GM12878 (cell line): ENCODE measurements at regions of chr2 and their contacts with region 1.

Region 1: DNA sequence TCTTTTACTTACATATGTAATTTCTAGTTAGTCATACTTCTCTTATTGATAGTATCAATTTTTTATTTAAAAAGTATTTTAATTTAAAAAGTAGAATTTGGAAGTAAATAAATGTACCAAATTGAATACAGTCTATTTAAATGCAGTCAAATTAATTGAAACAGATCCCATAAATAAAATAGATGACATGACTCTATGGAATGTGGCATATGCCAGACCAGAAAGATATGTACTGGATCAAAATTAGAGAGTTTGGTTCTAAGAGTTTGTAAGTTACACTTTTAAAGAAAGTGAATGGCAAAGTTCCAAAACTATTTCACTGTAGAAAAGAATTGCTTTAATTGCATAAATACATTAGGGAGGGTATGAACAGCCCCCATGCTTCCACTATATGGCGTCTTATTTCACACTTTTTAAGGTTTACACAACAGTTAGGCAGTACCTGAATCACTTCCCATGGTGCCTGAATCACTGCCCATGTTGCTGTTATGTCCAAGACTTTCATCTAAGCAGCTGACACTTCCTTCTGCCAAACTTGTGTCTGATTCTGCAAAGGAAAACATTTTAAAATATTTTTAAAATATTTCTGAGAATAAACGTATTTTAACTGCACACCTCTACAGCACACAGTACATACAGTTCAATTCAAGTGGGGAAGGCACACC is 25.2 kb downstream of the IFIH1 start:
- DNase-seq: no peak
- ATAC-seq: no peak
- H3K4me3 ChIP-seq: no peak overlapping the region
- H3K27ac ChIP-seq: no peak overlapping the region
- H3K4me1 ChIP-seq: no peaks in the 10 kb centered on the region
- H3K27me3 ChIP-seq: no peaks in the 10 kb centered on the region
- CTCF ChIP-seq: no peak
- EP300 ChIP-seq: no peak
- POLR2A ChIP-seq: no peak
- RAD21 ChIP-seq: no peak

Region 2: DNA sequence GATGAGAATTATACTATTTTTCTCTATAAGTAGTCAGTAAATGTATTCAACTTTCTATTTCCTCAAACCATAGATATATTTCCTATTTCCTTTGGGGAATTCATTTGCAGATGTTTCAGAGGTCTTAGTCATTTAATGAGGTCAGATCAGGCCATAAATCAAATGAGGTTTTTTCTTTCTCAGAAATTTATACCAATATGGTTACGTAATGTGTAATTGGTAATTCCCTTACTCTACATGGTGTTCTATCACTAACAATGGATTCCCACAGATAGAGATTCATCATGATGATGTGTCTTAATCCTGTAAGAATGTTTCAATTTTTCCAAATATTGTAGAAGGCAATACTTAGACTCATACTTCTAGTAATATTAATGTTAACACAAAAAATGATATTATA is 327.3 kb before region 1 on chr2:
- CTCF ChIA-PET with region 1: no interaction called
- POLR2A ChIA-PET with region 1: no interaction called
- RAD21 ChIA-PET with region 1: no interaction called
- SMC1A ChIA-PET with region 1: no interaction called
- in situ Hi-C with region 1: no loop called
- intact Hi-C with region 1: no loop called
- DNase-seq: no peak
- ATAC-seq: no peak; the same call in 1 of the 3 replicates
- H3K4me3 ChIP-seq: no peak overlapping the region
- H3K27ac ChIP-seq: no peak overlapping the region
- H3K4me1 ChIP-seq: no peaks in the 10 kb centered on the region
- H3K27me3 ChIP-seq: no peaks in the 10 kb centered on the region
- CTCF ChIP-seq: no peak
- EP300 ChIP-seq: no peak
- POLR2A ChIP-seq: no peak
- RAD21 ChIP-seq: no peak

Region 3: DNA sequence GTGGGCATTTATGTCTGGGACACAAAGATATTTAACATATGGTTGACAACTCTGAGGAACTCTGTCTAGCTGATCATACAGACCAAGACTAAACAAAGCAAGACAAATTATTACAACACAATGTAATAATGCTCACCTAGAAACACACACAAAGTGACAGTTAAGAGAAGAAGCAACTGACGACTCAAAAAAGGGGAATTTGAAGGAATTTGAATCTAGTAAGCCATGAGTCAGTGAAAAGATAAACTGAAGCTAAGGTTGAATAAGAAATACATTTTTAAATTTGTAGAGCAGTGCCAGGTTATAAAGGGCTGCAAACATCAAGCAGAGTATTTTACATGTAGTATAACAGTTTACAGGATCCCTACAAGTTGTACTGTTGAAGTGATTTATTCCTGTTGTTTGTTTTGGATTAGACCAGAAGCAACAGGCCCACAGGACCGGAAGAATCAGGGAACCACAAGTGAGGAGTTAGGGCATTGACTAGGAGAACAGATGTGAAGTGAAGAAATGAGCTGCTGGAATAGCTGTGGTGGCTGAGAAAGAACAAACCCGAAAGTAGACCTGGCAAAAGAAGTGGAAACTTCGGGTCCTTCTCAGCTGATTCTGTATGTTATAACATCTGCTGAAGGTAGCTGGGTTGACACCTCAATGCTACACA is 10.4 kb before region 1 on chr2:
- CTCF ChIA-PET with region 1: interaction called, 316 read pairs
- POLR2A ChIA-PET with region 1: interaction called, 3 read pairs
- RAD21 ChIA-PET with region 1: interaction called, 9 read pairs
- SMC1A ChIA-PET with region 1: interaction called, 13 read pairs
- in situ Hi-C with region 1: no loop called
- intact Hi-C with region 1: no loop called
- DNase-seq: no peak
- ATAC-seq: no peak
- H3K4me3 ChIP-seq: no peak overlapping the region
- H3K27ac ChIP-seq: no peak overlapping the region
- H3K4me1 ChIP-seq: no peaks in the 10 kb centered on the region
- H3K27me3 ChIP-seq: no peaks in the 10 kb centered on the region
- CTCF ChIP-seq: no peak
- EP300 ChIP-seq: no peak
- POLR2A ChIP-seq: no peak
- RAD21 ChIP-seq: no peak

Region 4: DNA sequence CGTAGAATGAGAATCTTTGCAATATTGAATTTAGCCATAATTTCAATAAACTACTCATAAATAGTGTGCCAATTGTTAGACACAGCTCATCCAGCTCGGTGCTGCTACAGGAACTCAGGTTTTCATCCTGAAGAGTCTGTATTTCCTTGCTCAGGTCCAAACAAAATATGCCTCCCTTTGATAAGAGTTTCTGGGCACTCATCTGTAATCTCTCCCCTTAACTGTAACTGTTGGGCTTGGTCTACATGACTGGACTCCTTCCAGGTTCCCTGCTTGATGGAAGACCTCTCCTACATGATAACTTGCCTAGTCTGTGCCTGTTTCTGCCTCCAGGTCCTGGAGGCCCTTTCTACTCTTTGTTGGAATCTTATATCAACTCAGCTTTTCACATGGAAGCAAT is 108.6 kb after region 1 on chr2:
- CTCF ChIA-PET with region 1: no interaction called
- POLR2A ChIA-PET with region 1: no interaction called
- RAD21 ChIA-PET with region 1: no interaction called
- SMC1A ChIA-PET with region 1: no interaction called
- in situ Hi-C with region 1: no loop called
- intact Hi-C with region 1: no loop called
- DNase-seq: no peak
- ATAC-seq: no peak
- H3K4me3 ChIP-seq: no peak overlapping the region
- H3K27ac ChIP-seq: no peak overlapping the region
- H3K4me1 ChIP-seq: no peaks in the 10 kb centered on the region
- H3K27me3 ChIP-seq: peaks cover 0 to 3% of the 10 kb centered on the region in 2 experiments; a peak in 1 of 4 replicates
- CTCF ChIP-seq: no peak
- EP300 ChIP-seq: no peak
- POLR2A ChIP-seq: no peak
- RAD21 ChIP-seq: no peak

Region 5: DNA sequence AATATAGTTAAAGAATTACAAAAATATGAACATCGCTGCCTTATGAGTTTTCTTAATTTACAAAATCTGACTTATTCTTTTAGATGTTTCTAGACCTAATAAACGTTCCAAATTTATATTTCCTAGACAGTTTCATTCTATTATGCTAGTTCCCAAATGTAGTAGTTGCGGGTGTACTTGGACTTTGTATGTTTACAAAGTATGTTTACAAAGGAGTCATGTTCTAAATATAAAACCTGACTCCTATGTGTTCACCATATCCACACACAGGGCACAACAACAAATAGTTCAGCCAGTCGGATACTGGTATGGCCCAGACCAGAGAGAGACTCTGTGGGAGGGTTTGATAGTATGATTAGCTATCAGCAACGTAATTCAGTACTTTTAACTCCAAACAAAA is 314.7 kb after region 1 on chr2:
- CTCF ChIA-PET with region 1: no interaction called
- POLR2A ChIA-PET with region 1: no interaction called
- RAD21 ChIA-PET with region 1: no interaction called
- SMC1A ChIA-PET with region 1: no interaction called
- in situ Hi-C with region 1: no loop called
- intact Hi-C with region 1: no loop called
- DNase-seq: no peak
- ATAC-seq: no peak
- H3K4me3 ChIP-seq: no peak overlapping the region
- H3K27ac ChIP-seq: no peak overlapping the region
- H3K4me1 ChIP-seq: no peaks in the 10 kb centered on the region
- H3K27me3 ChIP-seq: no peaks in the 10 kb centered on the region
- CTCF ChIP-seq: no peak
- EP300 ChIP-seq: no peak
- POLR2A ChIP-seq: no peak
- RAD21 ChIP-seq: no peak